ENCODE measurements at regions of chr6 and their contacts with region 1.

Region 1: GRCh38 chr6:110815217-110816109 is at the start of gene CDK19:
- DNase-seq: peak; percentile 99
- H3K4me3 ChIP-seq: peak within 1 kb of the TSS; percentile 74
- H3K27ac ChIP-seq: peak within 1 kb of the TSS; percentile 97
- H3K4me1 ChIP-seq: peaks cover 10% of the 10 kb centered on the region
- H3K27me3 ChIP-seq: no peaks in the 10 kb centered on the region
- CTCF ChIP-seq: no peak
- total RNA-seq, gene CDK19: 23.7 and 27.4 TPM in 2 replicates

Region 2: DNA sequence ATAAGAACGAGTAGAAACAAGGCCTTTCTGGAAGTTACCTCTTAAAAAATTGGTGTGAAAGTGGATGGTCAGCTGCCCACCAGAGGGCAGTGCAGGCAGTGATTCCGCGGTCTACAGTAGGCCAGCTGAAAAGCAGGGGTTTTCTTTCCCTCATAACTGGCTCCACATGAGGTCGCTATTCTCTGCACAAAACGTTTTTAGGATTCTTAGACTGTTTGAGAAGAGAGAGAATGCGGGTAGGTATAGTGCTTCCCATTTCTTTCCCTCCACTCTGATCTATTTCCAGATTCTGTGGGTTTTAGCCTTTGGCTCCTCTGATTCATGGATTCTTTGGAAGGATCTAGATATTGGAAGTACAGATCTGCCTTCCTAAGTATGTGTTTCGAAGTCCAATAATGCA is 1110.2 kb before region 1 on chr6:
- CTCF ChIA-PET with region 1: interaction called, 20 read pairs
- POLR2A ChIA-PET with region 1: no interaction called
- intact Hi-C with region 1: no loop called
- DNase-seq: peak; percentile 92
- H3K4me3 ChIP-seq: no peak overlapping the region
- H3K27ac ChIP-seq: no peak overlapping the region
- H3K4me1 ChIP-seq: peaks cover 4% of the 10 kb centered on the region
- H3K27me3 ChIP-seq: no peaks in the 10 kb centered on the region
- CTCF ChIP-seq: peak; percentile 99

Region 3: DNA sequence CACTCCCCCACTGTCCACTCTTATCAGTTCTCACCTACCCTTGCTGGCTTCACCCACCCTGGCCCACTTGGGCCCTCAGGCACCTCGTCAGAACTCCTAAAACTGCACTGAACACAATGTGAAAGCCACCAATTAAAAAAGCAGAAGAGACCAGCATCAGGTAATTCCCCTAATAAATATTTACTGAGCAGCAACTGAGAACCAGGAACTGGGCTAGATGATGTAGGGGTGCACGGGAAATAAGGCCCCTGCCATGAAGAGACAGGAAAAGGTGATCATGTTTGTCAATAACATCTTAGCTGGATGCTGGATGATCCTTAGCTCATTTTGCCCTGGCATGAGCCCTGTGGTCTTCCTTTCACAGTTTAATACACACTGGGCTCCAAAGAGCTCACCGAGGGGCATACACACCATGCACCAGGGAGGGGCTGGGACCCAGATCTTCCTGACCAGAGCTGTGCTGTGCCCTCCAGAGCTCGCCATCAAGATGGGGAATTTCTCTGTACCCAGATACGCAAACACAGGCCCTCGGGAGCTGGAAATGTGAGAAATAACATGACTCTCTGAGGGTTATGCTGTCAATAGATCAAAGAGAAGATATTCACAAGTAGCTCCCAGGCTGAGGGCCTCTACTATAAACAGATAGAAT is 225.5 kb before region 1 on chr6:
- CTCF ChIA-PET with region 1: no interaction called
- POLR2A ChIA-PET with region 1: interaction called, 23 read pairs
- intact Hi-C with region 1: no loop called
- DNase-seq: no peak
- H3K4me3 ChIP-seq: no peak overlapping the region
- H3K27ac ChIP-seq: no peak overlapping the region
- H3K4me1 ChIP-seq: no peaks in the 10 kb centered on the region
- H3K27me3 ChIP-seq: no peaks in the 10 kb centered on the region
- CTCF ChIP-seq: no peak

Region 4: DNA sequence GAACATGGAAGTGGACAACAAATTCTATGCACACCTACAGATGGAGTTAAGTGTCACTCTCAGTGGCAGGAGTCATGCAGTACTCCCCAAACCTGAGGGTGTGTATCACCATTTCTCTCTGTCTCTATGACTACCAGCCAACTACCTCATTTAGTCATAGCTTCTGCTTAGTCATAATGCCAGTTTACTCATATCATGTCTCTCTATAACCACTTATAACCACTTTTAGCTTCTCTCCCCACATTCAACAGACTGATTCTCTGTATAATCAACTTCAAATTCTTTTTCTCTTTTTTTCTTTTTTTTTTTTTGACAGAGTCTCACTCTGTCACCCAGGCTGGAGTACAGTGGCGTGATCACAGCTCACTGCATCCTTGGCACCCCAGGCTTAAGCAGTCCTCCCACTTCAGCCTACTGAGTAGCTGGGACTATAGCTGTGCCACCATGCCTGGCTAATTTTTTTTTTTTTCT is 129.3 kb after region 1 on chr6:
- CTCF ChIA-PET with region 1: interaction called, 10 read pairs
- POLR2A ChIA-PET with region 1: no interaction called
- intact Hi-C with region 1: no loop called
- DNase-seq: no peak
- H3K4me3 ChIP-seq: no peak overlapping the region
- H3K27ac ChIP-seq: no peak overlapping the region
- H3K4me1 ChIP-seq: no peaks in the 10 kb centered on the region
- H3K27me3 ChIP-seq: no peaks in the 10 kb centered on the region
- CTCF ChIP-seq: no peak

Measured in A673 (cell line).